Posterior cingulate gyrus (tissue), 11 donors: ENCODE measurements at regions of chr6 and their contacts with region 1.

Region 1: GRCh38 chr6:147202516-147203312 is 1.5 kb upstream of the STXBP5 start:
- DNase-seq: peak; percentile 74 to 97 (median 81)

Region 2: GRCh38 chr6:147065786-147066185 is 136.9 kb before region 1 on chr6:
- intact Hi-C with region 1: no loop called
- DNase-seq: no peak

Region 3: DNA sequence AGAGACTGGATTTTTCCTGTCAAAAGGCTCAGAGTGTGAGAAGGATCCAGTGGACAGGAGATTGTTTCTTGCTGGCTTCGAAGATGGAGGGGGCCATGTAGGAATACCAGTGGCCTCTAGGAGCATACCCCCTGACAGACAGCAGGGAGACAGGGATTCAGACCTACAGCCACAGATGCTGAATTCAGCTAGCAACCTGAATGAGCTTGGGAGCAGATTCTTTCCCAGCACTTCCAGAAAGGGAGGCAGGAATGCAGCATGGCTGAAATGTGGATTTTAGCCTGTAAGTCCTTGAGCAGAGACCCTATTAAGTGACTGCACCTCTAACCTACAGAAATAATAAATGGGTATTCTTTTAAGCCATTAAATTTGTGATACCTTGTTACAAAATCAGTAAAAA is 46.1 kb after region 1 on chr6:
- intact Hi-C with region 1: no loop called
- DNase-seq: no peak

Region 4: DNA sequence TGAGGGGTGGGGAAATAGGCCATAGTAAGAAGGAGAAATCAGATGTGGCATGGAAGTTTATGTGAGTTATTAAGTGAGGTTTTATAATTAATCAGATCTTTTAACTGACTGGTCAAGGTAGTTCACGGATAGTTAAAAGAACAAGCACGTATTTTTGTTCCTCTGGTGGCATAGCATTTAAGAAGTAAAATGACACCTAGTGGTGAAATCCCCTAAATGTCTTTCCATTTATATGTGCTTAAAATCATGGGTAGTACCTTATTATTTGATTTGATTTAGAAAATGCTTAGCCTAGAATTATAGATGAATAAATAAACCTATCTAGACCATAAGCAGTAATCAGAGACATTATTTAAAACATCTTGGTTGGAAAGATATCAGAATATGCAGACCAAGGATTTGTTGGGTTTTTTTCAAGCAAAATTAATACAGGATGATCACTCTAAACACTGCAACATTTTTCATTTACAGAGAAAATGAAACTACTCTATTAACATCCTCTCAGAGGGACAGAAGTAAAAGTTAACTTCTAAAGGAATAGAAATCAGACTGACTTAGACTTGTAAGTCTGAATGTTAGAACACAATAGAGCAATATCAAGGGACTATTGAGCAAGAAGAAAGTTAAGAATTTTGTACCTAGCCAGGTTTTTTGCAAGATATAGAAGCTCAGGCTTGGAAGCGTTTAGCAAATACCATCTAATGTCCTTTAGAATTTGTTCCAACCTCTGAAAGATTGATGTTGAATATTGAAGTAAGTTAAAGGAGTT is 82.6 kb after region 1 on chr6:
- intact Hi-C with region 1: loop called (anchors 10 kb)
- DNase-seq: no peak